ENCODE measurements at regions of chr1 and their contacts with region 1.

Region 1: GRCh38 chr1:156054500-156055280 is at the start of gene LAMTOR2:
- DNase-seq: peak; percentile 98
- H3K4me3 ChIP-seq: peak within 1 kb of the TSS; percentile 73 to 94 (median 87)
- H3K27ac ChIP-seq: peak within 1 kb of the TSS; percentile 86 to 97 (median 92)
- H3K4me1 ChIP-seq: peaks cover 0 to 32% (median 13%) of the 10 kb centered on the region in 4 donors
- H3K27me3 ChIP-seq: no peaks in the 10 kb centered on the region
- CTCF ChIP-seq: no peak
- EP300 ChIP-seq: no peak
- POLR2A ChIP-seq: peak; percentile 9 to 40
- total RNA-seq, gene LAMTOR2: 55.4 to 86.4 (median 71.3) TPM

Region 2: DNA sequence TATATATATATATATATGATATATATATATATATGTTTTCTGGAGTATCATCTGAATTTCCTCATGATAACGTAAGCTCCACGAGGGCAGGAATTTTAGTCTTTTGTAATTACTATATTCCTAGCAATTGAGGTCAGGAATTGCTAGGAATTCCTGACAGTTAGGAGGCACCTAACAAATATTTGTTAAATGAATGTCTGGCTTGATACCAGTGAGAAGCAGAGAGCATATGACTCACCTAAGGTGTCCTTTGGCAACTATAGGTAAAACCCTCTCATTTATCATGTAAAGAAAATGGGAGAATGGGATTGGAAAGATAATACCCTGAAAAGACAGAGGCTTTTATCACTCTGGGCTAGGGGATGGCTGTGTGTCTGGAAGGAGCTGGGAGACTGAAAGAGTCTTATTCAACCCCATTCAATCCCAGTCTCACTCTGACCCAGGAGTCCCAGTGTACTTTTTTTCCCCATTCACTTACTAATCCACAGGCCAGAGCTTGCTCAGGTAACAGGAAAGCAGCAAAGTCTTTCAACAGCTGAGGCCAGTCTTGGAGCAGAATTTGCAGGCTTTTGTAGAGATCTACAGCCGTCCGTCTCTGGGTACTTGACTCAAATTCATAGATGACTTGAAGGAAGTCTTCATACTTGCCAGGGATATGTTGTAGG is 294.6 kb before region 1 on chr1:
- intact Hi-C with region 1: no loop called
- DNase-seq: no peak
- H3K4me3 ChIP-seq: no peak overlapping the region
- H3K27ac ChIP-seq: no peak overlapping the region
- H3K4me1 ChIP-seq: no peaks in the 10 kb centered on the region
- H3K27me3 ChIP-seq: no peaks in the 10 kb centered on the region
- CTCF ChIP-seq: no peak
- EP300 ChIP-seq: no peak
- POLR2A ChIP-seq: no peak

Region 3: GRCh38 chr1:156021954-156022353 is 32.7 kb before region 1 on chr1:
- intact Hi-C with region 1: loop called (anchors 2 kb)
- DNase-seq: no peak
- H3K4me3 ChIP-seq: no peak overlapping the region
- H3K27ac ChIP-seq: no peak overlapping the region
- H3K4me1 ChIP-seq: peaks cover 0 to 18% (median 17%) of the 10 kb centered on the region in 4 donors
- H3K27me3 ChIP-seq: no peaks in the 10 kb centered on the region
- CTCF ChIP-seq: no peak
- EP300 ChIP-seq: no peak
- POLR2A ChIP-seq: no peak

Region 4: GRCh38 chr1:156042828-156043227 is 11.9 kb before region 1 on chr1:
- intact Hi-C with region 1: no loop called
- DNase-seq: no peak
- H3K4me3 ChIP-seq: no peak overlapping the region
- H3K27ac ChIP-seq: no peak overlapping the region
- H3K4me1 ChIP-seq: no peaks in the 10 kb centered on the region
- H3K27me3 ChIP-seq: no peaks in the 10 kb centered on the region
- CTCF ChIP-seq: no peak
- EP300 ChIP-seq: no peak
- POLR2A ChIP-seq: no peak

Region 5: GRCh38 chr1:156082309-156083091 is 27.8 kb after region 1 on chr1 and contains the start of gene MEX3A:
- intact Hi-C with region 1: loop called (anchors 2 kb)
- DNase-seq: peak; percentile 88
- H3K4me3 ChIP-seq: peak within 1 kb of the TSS; percentile 63 to 98 (median 86)
- H3K27ac ChIP-seq: peak within 1 kb of the TSS; percentile 68 to 81 (median 74)
- H3K4me1 ChIP-seq: peaks cover 0 to 38% (median 25%) of the 10 kb centered on the region in 4 donors
- H3K27me3 ChIP-seq: no peaks in the 10 kb centered on the region
- CTCF ChIP-seq: no peak
- EP300 ChIP-seq: no peak
- POLR2A ChIP-seq: no peak
- total RNA-seq, gene MEX3A: 0.27 to 0.36 (median 0.30) TPM

Region 6: GRCh38 chr1:156129706-156130581 is 75.3 kb after region 1 on chr1:
- intact Hi-C with region 1: loop called (anchors 2 kb)
- DNase-seq: peak; percentile 95
- H3K4me3 ChIP-seq: peak overlapping the region in 2 of 4 donors; percentile 22 to 24
- H3K27ac ChIP-seq: peak overlapping the region; percentile 95 to 100 (median 98)
- H3K4me1 ChIP-seq: peaks cover 4 to 64% (median 62%) of the 10 kb centered on the region in 4 donors
- H3K27me3 ChIP-seq: no peaks in the 10 kb centered on the region
- CTCF ChIP-seq: peak; percentile 98 to 99 (median 98)
- EP300 ChIP-seq: no peak
- POLR2A ChIP-seq: no peak